ENCODE measurements at regions of chr17 and their contacts with region 1.

Region 1: GRCh38 chr17:82320956-82321927 is 3.8 kb upstream of the CD7 start:
- DNase-seq: no peak
- ATAC-seq: peak; percentile 68 to 91 (median 82)
- H3K4me3 ChIP-seq: peak overlapping the region; percentile 22
- H3K27ac ChIP-seq: no peak overlapping the region
- H3K4me1 ChIP-seq: peaks cover 5% of the 10 kb centered on the region
- H3K27me3 ChIP-seq: no peaks in the 10 kb centered on the region
- CTCF ChIP-seq: peak; percentile 86

Region 2: GRCh38 chr17:82205719-82206508 is 115.3 kb before region 1 on chr17:
- intact Hi-C with region 1: loop called (anchors 1 to 2 kb)
- DNase-seq: peak; percentile 85 to 91
- ATAC-seq: peak; percentile 77 to 95 (median 86)
- H3K4me3 ChIP-seq: peak overlapping the region; percentile 5
- H3K27ac ChIP-seq: peak overlapping the region; percentile 23
- H3K4me1 ChIP-seq: peaks cover 5% of the 10 kb centered on the region
- H3K27me3 ChIP-seq: no peaks in the 10 kb centered on the region
- CTCF ChIP-seq: peak; percentile 85

Region 3: GRCh38 chr17:82267575-82268379 is 53.5 kb before region 1 on chr17:
- intact Hi-C with region 1: no loop called
- DNase-seq: peak; percentile 97 to 99
- ATAC-seq: peak; percentile 92 to 97 (median 94)
- H3K4me3 ChIP-seq: peak overlapping the region; percentile 46
- H3K27ac ChIP-seq: peak overlapping the region; percentile 81
- H3K4me1 ChIP-seq: peaks cover 65% of the 10 kb centered on the region
- H3K27me3 ChIP-seq: no peaks in the 10 kb centered on the region
- CTCF ChIP-seq: no peak